ENCODE measurements at regions of chr11 and their contacts with region 1.

Region 1: DNA sequence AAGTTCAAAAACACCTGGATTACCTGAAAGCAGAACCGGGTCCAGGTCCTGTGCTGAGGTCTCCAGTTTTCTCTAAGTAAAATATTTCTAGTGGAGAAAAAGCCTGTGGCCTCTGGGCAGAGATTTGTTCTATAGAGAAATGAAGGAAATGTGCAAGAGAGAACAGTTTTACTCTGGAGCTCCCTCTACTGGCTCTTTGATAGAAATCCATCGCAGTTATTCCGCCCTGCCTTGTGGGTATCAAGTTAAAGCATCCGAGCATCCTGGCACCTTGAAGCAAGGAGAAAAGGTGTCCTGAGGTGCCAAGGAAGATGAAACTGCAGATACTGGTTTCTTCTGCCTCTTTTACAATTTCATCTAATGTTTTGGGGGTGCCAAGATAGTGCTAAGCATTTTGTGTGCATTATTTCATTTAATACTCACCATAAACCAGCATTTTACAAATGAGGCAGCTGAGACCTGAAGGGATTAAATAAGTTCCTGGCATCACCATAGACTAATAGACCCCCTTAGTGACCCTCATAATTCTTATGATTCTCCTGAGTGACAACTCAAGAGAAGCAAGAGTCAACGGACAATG is 113.1 kb upstream of the HSD17B12 start:
- DNase-seq: no peak
- H3K4me3 ChIP-seq: no peak overlapping the region
- CTCF ChIP-seq: peak; percentile 53

Region 2: GRCh38 chr11:43504316-43504950 is 63.1 kb before region 1 on chr11:
- CTCF ChIA-PET with region 1: interaction called, 29 read pairs
- POLR2A ChIA-PET with region 1: no interaction called
- DNase-seq: no peak
- H3K4me3 ChIP-seq: no peak overlapping the region
- CTCF ChIP-seq: peak; percentile 25

Region 3: GRCh38 chr11:43550714-43551113 is 16.8 kb before region 1 on chr11:
- CTCF ChIA-PET with region 1: interaction called, 26 read pairs
- POLR2A ChIA-PET with region 1: no interaction called
- DNase-seq: no peak
- H3K4me3 ChIP-seq: no peak overlapping the region
- CTCF ChIP-seq: no peak

Region 4: DNA sequence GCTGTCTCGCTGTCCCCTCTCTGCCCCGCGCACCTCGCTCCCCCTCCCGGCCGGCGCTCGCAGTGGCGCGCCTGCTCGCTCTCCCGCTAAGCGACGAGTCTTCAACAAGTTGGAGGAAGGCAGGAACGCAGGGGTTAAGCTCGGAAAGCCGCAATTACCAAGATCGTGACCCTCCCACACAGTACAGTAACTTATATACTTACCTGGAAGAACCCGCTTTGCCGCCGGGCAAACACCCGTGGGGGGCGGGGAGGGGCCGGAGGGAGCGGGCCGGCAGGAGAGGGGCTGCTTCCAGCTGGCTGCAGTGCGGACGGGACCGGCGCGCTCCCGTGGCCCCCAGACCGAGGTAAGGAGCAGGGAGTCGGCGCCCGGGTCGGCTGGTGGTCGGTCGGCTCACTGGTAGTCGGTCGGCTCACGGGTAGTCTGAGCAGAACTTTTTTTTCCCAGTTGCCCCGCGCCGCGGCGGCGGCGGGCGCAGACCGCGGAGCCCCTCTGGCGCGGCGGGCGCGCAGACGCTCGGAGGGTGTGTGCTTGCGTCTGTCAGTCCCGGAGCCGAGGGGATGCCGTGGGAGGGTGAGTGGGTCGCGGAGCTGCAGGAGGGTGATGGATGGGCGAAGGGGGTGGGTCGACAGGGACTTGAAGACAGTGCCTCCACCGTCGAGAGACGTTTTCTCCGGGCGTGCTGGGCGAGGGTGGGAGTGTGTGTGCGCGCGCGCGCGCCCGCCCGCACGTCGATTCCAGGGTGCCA is 11.9 kb after region 1 on chr11:
- CTCF ChIA-PET with region 1: interaction called, 70 read pairs
- POLR2A ChIA-PET with region 1: no interaction called
- DNase-seq: no peak
- H3K4me3 ChIP-seq: peak overlapping the region; percentile 61
- CTCF ChIP-seq: peak; percentile 75

Region 5: GRCh38 chr11:43664295-43664694 is 96.8 kb after region 1 on chr11:
- CTCF ChIA-PET with region 1: no interaction called
- POLR2A ChIA-PET with region 1: no interaction called
- DNase-seq: no peak
- H3K4me3 ChIP-seq: no peak overlapping the region
- CTCF ChIP-seq: no peak

Measured in AG04449 (cell line).